ENCODE measurements at regions of chr9 and their contacts with region 1.

Region 1: DNA sequence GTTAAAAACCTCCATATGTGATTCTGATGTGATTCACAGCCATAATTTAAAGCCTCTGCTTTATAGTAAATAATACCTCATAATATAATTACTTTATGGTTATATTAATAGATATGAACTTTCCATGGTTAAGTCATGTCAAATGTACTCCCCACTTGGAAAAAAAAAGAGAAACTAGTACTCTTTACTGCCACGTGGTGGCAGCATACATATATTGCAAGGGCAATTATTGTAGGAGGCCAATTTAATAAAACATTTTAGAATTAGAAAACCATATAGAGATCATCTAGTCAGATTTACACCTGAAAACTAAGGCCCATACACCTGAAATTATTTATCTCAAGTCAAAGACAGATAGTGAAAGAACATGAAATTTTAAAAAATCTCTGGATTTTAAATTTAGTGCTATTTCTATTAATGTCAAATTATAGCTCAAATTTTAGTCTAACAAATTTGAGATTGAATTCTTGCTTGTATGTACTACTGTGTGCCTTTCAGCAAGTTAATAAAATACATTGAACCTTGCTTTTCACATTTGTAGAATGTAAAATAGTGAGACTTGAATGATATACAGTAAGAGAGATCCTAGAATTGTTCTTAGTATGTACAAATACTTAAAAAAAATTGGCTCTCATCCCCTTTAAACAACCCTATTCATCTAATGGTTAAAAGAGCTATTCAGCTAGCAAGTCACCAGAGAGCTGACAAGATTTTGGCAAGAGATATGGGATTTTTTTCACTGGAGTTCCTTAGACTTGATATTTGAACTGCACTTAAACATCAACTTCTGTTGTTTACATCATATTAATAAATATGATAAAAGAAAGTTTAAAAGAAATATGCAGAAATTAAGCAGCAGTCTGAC is 603.8 kb downstream of the TLE4 start:
- DNase-seq: no peak
- H3K4me3 Mint-ChIP-seq: no peak overlapping the region
- H3K27ac Mint-ChIP-seq: no peak overlapping the region
- H3K4me1 Mint-ChIP-seq: no peaks in the 10 kb centered on the region
- H3K27me3 Mint-ChIP-seq: no peaks in the 10 kb centered on the region

Region 2: GRCh38 chr9:78439190-78439865 is 1736.2 kb before region 1 on chr9:
- intact Hi-C with region 1: loop called (anchors 10 kb)
- DNase-seq: peak; percentile 42
- H3K4me3 Mint-ChIP-seq: no peak overlapping the region
- H3K27ac Mint-ChIP-seq: no peak overlapping the region
- H3K4me1 Mint-ChIP-seq: peaks cover 8% of the 10 kb centered on the region
- H3K27me3 Mint-ChIP-seq: peaks cover 16% of the 10 kb centered on the region

Region 3: GRCh38 chr9:79129865-79130480 is 1045.5 kb before region 1 on chr9:
- intact Hi-C with region 1: loop called (anchors 1 kb)
- DNase-seq: no peak
- H3K4me3 Mint-ChIP-seq: no peak overlapping the region
- H3K27ac Mint-ChIP-seq: no peak overlapping the region
- H3K4me1 Mint-ChIP-seq: no peaks in the 10 kb centered on the region
- H3K27me3 Mint-ChIP-seq: no peaks in the 10 kb centered on the region

Region 4: GRCh38 chr9:80242002-80242401 is 66.5 kb after region 1 on chr9:
- intact Hi-C with region 1: no loop called
- DNase-seq: no peak
- H3K4me3 Mint-ChIP-seq: no peak overlapping the region
- H3K27ac Mint-ChIP-seq: no peak overlapping the region
- H3K4me1 Mint-ChIP-seq: no peaks in the 10 kb centered on the region
- H3K27me3 Mint-ChIP-seq: peaks cover 2% of the 10 kb centered on the region

Region 5: DNA sequence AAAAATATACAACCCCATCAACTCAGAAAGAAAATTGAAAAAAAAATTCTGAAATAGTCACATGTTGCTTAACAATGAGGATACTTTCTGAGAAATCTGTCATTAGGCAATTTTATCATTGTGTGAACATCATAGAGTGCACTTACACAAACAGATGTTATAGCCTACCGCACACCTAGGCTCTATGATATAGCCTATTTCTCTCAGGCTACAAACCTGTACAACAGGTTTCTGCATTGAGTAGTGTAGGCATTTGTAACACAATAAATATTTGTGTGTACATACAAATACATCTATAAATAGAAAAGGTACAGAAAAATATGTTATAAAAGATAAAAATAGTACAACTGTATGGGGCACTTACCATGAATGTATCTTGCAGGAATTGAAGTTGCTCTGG is 216.4 kb after region 1 on chr9:
- intact Hi-C with region 1: no loop called
- DNase-seq: no peak
- H3K4me3 Mint-ChIP-seq: no peak overlapping the region
- H3K27ac Mint-ChIP-seq: no peak overlapping the region
- H3K4me1 Mint-ChIP-seq: no peaks in the 10 kb centered on the region
- H3K27me3 Mint-ChIP-seq: no peaks in the 10 kb centered on the region

Region 6: GRCh38 chr9:80664327-80665200 is 489.0 kb after region 1 on chr9:
- intact Hi-C with region 1: no loop called
- DNase-seq: no peak
- H3K4me3 Mint-ChIP-seq: no peak overlapping the region
- H3K27ac Mint-ChIP-seq: no peak overlapping the region
- H3K4me1 Mint-ChIP-seq: no peaks in the 10 kb centered on the region
- H3K27me3 Mint-ChIP-seq: no peaks in the 10 kb centered on the region

Measured in activated T-helper 1 cell treated with anti-CD3 and anti-CD28 coated beads, Interleukin-12 subunit alpha, Interleukin-12 subunit beta, Interleukin-2, Interleukin-4 antibody, amounts not matched to agents 30 ng/mL and 10 ng/mL and 1 ng/mL, durations not matched to agents 14 hours and 24 hours and 36 hours (primary cell).